ENCODE measurements at regions of chr20 and their contacts with region 1.

Region 1: DNA sequence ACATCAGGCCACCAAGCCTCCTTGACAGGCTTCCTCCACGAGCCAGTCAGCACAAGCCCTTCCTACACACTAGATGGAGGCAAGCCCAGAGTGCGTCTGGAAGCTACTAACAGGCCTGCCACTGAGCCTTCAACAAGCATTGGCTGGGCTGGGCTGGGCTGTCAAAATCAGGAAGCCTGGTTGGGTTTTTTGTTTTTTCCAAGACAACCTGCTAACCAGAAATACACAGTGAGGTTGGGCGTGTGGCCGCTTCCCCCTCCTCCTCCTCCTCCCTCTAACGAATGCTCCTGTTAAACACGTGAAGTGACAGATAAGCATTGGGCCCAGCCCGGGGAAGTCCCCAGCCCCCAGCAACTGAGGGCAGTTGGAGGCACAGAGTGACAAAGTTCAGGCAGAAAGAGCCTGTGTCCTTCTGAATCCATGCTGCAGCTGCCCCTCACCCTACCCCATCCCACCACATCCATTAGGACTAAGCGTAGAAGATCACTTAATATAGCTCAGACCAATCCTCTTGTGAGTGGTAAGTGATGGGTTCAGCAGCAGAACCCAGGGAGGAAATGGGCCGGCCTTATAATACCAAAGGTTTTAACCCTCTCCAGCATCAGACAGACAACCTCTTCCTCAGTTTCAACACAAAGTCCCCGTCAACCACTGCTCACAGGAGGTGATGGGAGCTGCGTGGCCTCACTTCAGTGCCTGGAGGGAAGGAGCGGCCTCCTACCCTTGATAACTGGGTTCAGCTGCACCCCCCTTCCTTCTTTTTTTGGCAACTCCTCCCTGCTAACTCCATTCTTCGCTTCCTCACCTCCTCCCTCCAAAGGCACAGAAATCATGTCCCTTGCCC is 1.1 kb downstream of the NFATC2 start:
- DNase-seq: peak; percentile 93
- ATAC-seq: peak; percentile 79
- H3K4me3 Mint-ChIP-seq: peak overlapping the region; percentile 89
- H3K27ac Mint-ChIP-seq: peak overlapping the region; percentile 100
- H3K4me1 Mint-ChIP-seq: peaks cover 45% of the 10 kb centered on the region
- H3K27me3 Mint-ChIP-seq: peaks cover 4% of the 10 kb centered on the region
- CTCF ChIP-seq: no peak

Region 2: GRCh38 chr20:51404298-51405060 is 136.9 kb before region 1 on chr20:
- CTCF ChIA-PET with region 1: interaction called, 6 read pairs
- POLR2A ChIA-PET with region 1: interaction called, 16 read pairs
- intact Hi-C with region 1: loop called (anchors 5 kb)
- DNase-seq: peak; percentile 93
- ATAC-seq: peak; percentile 80
- H3K4me3 Mint-ChIP-seq: peak overlapping the region; percentile 5
- H3K27ac Mint-ChIP-seq: peak overlapping the region; percentile 99
- H3K4me1 Mint-ChIP-seq: peaks cover 87% of the 10 kb centered on the region
- H3K27me3 Mint-ChIP-seq: no peaks in the 10 kb centered on the region
- CTCF ChIP-seq: no peak

Region 3: GRCh38 chr20:51480507-51481270 is 60.7 kb before region 1 on chr20:
- CTCF ChIA-PET with region 1: interaction called, 18 read pairs
- POLR2A ChIA-PET with region 1: interaction called, 22 read pairs
- intact Hi-C with region 1: loop called (anchors 2 kb)
- DNase-seq: peak; percentile 93
- ATAC-seq: peak; percentile 89
- H3K4me3 Mint-ChIP-seq: peak overlapping the region; percentile 65
- H3K27ac Mint-ChIP-seq: peak overlapping the region; percentile 99
- H3K4me1 Mint-ChIP-seq: peaks cover 89% of the 10 kb centered on the region
- H3K27me3 Mint-ChIP-seq: no peaks in the 10 kb centered on the region
- CTCF ChIP-seq: no peak

Region 4: GRCh38 chr20:51500311-51500710 is 41.1 kb before region 1 on chr20:
- CTCF ChIA-PET with region 1: interaction called, 7 read pairs
- POLR2A ChIA-PET with region 1: interaction called, 31 read pairs
- intact Hi-C with region 1: no loop called
- DNase-seq: peak; percentile 79
- ATAC-seq: peak; percentile 82
- H3K4me3 Mint-ChIP-seq: no peak overlapping the region
- H3K27ac Mint-ChIP-seq: peak overlapping the region; percentile 92
- H3K4me1 Mint-ChIP-seq: peaks cover 82% of the 10 kb centered on the region
- H3K27me3 Mint-ChIP-seq: no peaks in the 10 kb centered on the region
- CTCF ChIP-seq: no peak

Region 5: GRCh38 chr20:51525241-51526129 is 15.9 kb before region 1 on chr20:
- CTCF ChIA-PET with region 1: interaction called, 23 read pairs
- POLR2A ChIA-PET with region 1: interaction called, 54 read pairs
- intact Hi-C with region 1: no loop called
- DNase-seq: peak; percentile 73
- ATAC-seq: peak; percentile 47
- H3K4me3 Mint-ChIP-seq: peak overlapping the region; percentile 74
- H3K27ac Mint-ChIP-seq: peak overlapping the region; percentile 99
- H3K4me1 Mint-ChIP-seq: peaks cover 73% of the 10 kb centered on the region
- H3K27me3 Mint-ChIP-seq: no peaks in the 10 kb centered on the region
- CTCF ChIP-seq: no peak

Region 6: GRCh38 chr20:51554538-51555165 is 13.2 kb after region 1 on chr20:
- CTCF ChIA-PET with region 1: interaction called, 25 read pairs
- POLR2A ChIA-PET with region 1: interaction called, 20 read pairs
- intact Hi-C with region 1: no loop called
- DNase-seq: peak; percentile 59
- ATAC-seq: peak; percentile 81
- H3K4me3 Mint-ChIP-seq: no peak overlapping the region
- H3K27ac Mint-ChIP-seq: peak overlapping the region; percentile 87
- H3K4me1 Mint-ChIP-seq: peaks cover 17% of the 10 kb centered on the region
- H3K27me3 Mint-ChIP-seq: peaks cover 14% of the 10 kb centered on the region
- CTCF ChIP-seq: no peak

Region 7: DNA sequence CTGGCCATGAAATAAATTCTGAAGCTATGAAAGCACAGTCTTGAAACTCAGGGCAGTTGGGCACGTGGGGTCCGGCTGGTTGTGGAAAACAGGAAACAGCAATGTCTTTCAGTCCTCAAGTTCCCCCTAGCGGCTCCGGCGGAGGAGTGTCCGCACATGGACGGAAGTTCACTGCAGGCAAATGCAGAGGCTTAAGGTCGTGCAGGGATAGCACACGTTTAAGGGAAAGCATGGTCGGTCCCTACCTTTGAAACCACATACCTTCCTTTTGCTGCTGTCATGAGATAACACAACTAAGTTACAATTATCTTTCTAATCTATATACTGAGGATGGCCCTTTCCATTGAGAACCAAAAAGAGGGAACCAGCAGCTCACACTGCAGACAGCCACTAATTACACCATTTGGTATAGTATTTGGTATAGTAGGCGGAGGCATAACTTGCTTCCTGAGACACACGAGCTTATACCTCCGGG is 53.7 kb after region 1 on chr20:
- CTCF ChIA-PET with region 1: interaction called, 49 read pairs
- POLR2A ChIA-PET with region 1: interaction called, 6 read pairs
- intact Hi-C with region 1: loop called (anchors 5 kb)
- DNase-seq: peak; percentile 91
- ATAC-seq: peak; percentile 94
- H3K4me3 Mint-ChIP-seq: peak overlapping the region; percentile 40
- H3K27ac Mint-ChIP-seq: peak overlapping the region; percentile 86
- H3K4me1 Mint-ChIP-seq: peaks cover 53% of the 10 kb centered on the region
- H3K27me3 Mint-ChIP-seq: peaks cover 6% of the 10 kb centered on the region
- CTCF ChIP-seq: peak; percentile 94

Region 8: GRCh38 chr20:51703400-51704287 is 162.2 kb after region 1 on chr20:
- CTCF ChIA-PET with region 1: no interaction called
- POLR2A ChIA-PET with region 1: no interaction called
- intact Hi-C with region 1: no loop called
- DNase-seq: no peak
- ATAC-seq: no peak
- H3K4me3 Mint-ChIP-seq: no peak overlapping the region
- H3K27ac Mint-ChIP-seq: no peak overlapping the region
- H3K4me1 Mint-ChIP-seq: peaks cover 3% of the 10 kb centered on the region
- H3K27me3 Mint-ChIP-seq: no peaks in the 10 kb centered on the region
- CTCF ChIP-seq: no peak